GM12878 (cell line): ENCODE measurements at regions of chr11 and their contacts with region 1.

Region 1: DNA sequence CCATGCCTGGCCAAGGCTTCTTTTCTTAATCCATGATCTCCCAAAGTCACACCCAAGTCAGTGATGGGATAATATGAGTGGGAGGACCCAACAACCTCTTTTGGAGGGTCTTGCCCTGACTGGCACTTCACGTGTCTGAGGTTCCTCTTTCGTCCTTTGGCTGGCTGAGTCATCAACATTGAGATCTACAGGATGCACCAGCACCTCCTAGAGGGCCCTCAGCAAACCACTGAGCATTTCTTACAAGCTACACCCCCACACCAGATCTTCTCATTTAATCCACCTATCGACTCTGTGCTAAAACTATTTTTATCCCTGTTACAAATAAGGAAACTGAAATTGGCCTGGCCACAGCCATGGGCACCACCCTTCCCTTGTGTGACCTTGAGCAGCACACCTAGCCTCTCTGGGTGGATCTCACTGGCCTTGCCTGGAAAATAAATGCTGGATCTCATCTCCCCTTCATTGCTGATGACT is 63.4 kb downstream of the FLI1 start:
- DNase-seq: peak; percentile 93
- ATAC-seq: peak; percentile 89
- H3K4me3 ChIP-seq: no peak overlapping the region
- H3K27ac ChIP-seq: peak overlapping the region; percentile 87
- H3K4me1 ChIP-seq: peaks cover 31% of the 10 kb centered on the region
- H3K27me3 ChIP-seq: no peaks in the 10 kb centered on the region
- CTCF ChIP-seq: peak; percentile 81 to 94 (median 92)
- EP300 ChIP-seq: 0 out of 4 replicates have a peak, but pooled peaks of 1 of the 2 experiments have one; percentile 56
- POLR2A ChIP-seq: no peak
- RAD21 ChIP-seq: peak; percentile 90

Region 2: DNA sequence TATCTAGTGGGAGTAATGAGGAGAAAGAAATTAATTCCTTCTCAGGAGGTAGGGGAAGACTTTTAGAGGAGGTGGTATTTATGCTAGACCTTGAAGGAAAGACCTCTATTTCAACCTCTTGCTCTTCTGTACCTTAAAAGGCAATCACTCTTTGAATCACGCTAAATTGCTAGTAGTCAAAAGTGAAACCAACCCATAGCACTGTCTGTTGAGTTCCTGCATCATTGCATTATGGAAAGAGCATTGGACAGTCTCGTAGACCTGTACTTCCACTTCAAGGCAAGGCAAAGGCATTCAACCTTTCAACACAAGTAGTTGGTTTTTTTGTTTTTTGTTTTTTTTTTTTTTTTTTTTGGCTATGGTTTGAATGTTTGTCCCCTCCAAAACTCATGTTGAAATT is 940.3 kb before region 1 on chr11:
- CTCF ChIA-PET with region 1: no interaction called
- POLR2A ChIA-PET with region 1: no interaction called
- RAD21 ChIA-PET with region 1: no interaction called
- SMC1A ChIA-PET with region 1: no interaction called
- in situ Hi-C with region 1: no loop called
- intact Hi-C with region 1: no loop called
- DNase-seq: no peak
- ATAC-seq: no peak
- H3K4me3 ChIP-seq: no peak overlapping the region
- H3K27ac ChIP-seq: no peak overlapping the region
- H3K4me1 ChIP-seq: no peaks in the 10 kb centered on the region
- H3K27me3 ChIP-seq: no peaks in the 10 kb centered on the region
- CTCF ChIP-seq: no peak
- EP300 ChIP-seq: no peak
- POLR2A ChIP-seq: no peak
- RAD21 ChIP-seq: no peak

Region 3: DNA sequence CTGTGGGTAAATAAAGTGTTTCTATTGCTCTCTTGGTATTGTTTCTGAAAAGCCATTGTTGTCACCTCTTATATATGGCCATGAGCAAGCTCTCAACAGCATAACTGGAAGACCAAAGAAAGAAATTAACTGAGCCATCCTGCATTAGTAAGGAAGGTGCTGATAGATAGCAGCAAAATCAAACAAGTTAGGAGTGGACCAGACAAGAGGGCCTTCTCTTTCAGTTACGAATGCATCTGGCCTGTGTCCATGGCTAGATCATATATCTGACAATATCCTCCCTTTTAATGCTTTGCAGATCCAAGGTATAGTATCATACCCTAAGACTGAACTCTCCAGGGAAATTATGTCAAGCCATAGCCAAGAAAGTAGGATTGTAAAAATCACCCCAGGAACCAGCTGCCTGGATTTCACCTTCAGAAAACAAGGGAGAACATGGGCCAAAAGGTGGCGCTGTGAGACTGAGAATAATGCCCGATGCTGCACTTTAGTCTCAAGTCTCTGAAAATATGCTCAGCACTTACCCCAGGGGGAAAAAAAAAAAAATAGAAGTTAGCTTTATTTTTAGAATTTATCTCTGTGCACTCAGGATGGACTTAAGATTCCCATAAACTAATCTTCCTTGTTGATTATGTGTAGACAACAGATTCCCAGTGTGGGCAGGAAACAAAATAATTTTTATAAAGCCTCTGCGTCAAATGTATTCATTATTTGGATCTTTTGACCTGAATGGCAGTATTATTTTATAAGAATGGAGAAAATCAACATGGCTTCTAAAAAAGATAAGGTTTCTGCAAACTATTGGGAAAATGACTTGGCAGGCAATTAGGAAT is 585.0 kb before region 1 on chr11:
- CTCF ChIA-PET with region 1: interaction called, 14 read pairs
- POLR2A ChIA-PET with region 1: no interaction called
- RAD21 ChIA-PET with region 1: interaction called, 22 read pairs
- SMC1A ChIA-PET with region 1: interaction called, 14 read pairs
- in situ Hi-C with region 1: loop called (anchors 5 kb)
- intact Hi-C with region 1: loop called (anchors 1 kb)
- DNase-seq: peak; percentile 38
- ATAC-seq: peak; percentile 93
- H3K4me3 ChIP-seq: no peak overlapping the region
- H3K27ac ChIP-seq: no peak overlapping the region
- H3K4me1 ChIP-seq: no peaks in the 10 kb centered on the region
- H3K27me3 ChIP-seq: no peaks in the 10 kb centered on the region; a peak in 2 of 4 replicates
- CTCF ChIP-seq: peak; percentile 68 to 91 (median 72)
- EP300 ChIP-seq: no peak
- POLR2A ChIP-seq: no peak
- RAD21 ChIP-seq: peak; percentile 97

Region 4: GRCh38 chr11:128552783-128553661 is 204.3 kb before region 1 on chr11:
- CTCF ChIA-PET with region 1: interaction called, 8 read pairs
- POLR2A ChIA-PET with region 1: no interaction called
- RAD21 ChIA-PET with region 1: interaction called, 23 read pairs
- SMC1A ChIA-PET with region 1: interaction called, 14 read pairs
- in situ Hi-C with region 1: no loop called
- intact Hi-C with region 1: loop called (anchors 1 kb)
- DNase-seq: peak; percentile 95
- ATAC-seq: peak; percentile 79
- H3K4me3 ChIP-seq: peak overlapping the region; percentile 69
- H3K27ac ChIP-seq: peak overlapping the region; percentile 100
- H3K4me1 ChIP-seq: peaks cover 50% of the 10 kb centered on the region
- H3K27me3 ChIP-seq: no peaks in the 10 kb centered on the region
- CTCF ChIP-seq: no peak
- EP300 ChIP-seq: peak in 1 of 2 experiments; percentile 35; a peak in 2 of 4 replicates
- POLR2A ChIP-seq: peak; percentile 82
- RAD21 ChIP-seq: 0 out of 2 replicates have a peak, but pooled peaks have one; percentile 2

Region 5: GRCh38 chr11:128624269-128625175 is 132.8 kb before region 1 on chr11:
- CTCF ChIA-PET with region 1: interaction called, 187 read pairs
- POLR2A ChIA-PET with region 1: interaction called, 4 read pairs
- RAD21 ChIA-PET with region 1: interaction called, 103 read pairs
- SMC1A ChIA-PET with region 1: interaction called, 159 read pairs
- in situ Hi-C with region 1: no loop called
- intact Hi-C with region 1: no loop called
- DNase-seq: no peak
- ATAC-seq: peak; percentile 77
- H3K4me3 ChIP-seq: no peak overlapping the region
- H3K27ac ChIP-seq: peak overlapping the region; percentile 86
- H3K4me1 ChIP-seq: peaks cover 66% of the 10 kb centered on the region
- H3K27me3 ChIP-seq: no peaks in the 10 kb centered on the region
- CTCF ChIP-seq: no peak
- EP300 ChIP-seq: peak in 1 of 2 experiments; percentile 21; a peak in 1 of 4 replicates
- POLR2A ChIP-seq: no peak
- RAD21 ChIP-seq: no peak

Region 6: DNA sequence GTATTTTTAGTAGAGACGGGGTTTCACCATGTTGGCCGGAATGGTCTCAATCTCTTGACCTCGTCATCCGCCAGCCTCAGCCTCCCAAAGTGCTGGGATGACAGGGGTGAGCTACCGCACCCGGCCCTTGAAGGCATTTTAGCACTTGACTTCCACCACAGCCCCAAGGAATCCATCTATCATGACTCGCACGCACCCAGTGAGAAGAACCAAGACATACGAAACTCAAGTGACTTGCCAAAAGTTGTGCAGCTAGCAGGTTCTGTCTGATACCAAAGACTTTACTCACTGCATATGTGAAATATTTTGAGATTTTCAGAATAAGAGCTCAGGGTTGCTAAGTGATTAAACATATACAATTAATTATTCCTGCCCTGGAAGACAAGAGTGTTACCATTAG is 42.4 kb before region 1 on chr11:
- CTCF ChIA-PET with region 1: interaction called, 11 read pairs
- POLR2A ChIA-PET with region 1: interaction called, 6 read pairs
- RAD21 ChIA-PET with region 1: interaction called, 13 read pairs
- SMC1A ChIA-PET with region 1: interaction called, 15 read pairs
- in situ Hi-C with region 1: no loop called
- intact Hi-C with region 1: no loop called
- DNase-seq: no peak
- ATAC-seq: no peak
- H3K4me3 ChIP-seq: no peak overlapping the region
- H3K27ac ChIP-seq: no peak overlapping the region
- H3K4me1 ChIP-seq: peaks cover 57% of the 10 kb centered on the region
- H3K27me3 ChIP-seq: no peaks in the 10 kb centered on the region
- CTCF ChIP-seq: no peak
- EP300 ChIP-seq: no peak
- POLR2A ChIP-seq: no peak
- RAD21 ChIP-seq: no peak

Region 7: GRCh38 chr11:128733440-128734102 is 23.7 kb before region 1 on chr11:
- CTCF ChIA-PET with region 1: interaction called, 90 read pairs
- POLR2A ChIA-PET with region 1: interaction called, 9 read pairs
- RAD21 ChIA-PET with region 1: interaction called, 83 read pairs
- SMC1A ChIA-PET with region 1: interaction called, 79 read pairs
- in situ Hi-C with region 1: no loop called
- intact Hi-C with region 1: loop called (anchors 1 kb)
- DNase-seq: no peak
- ATAC-seq: peak; percentile 55
- H3K4me3 ChIP-seq: peak overlapping the region; percentile 24; the same call in 1 of the 2 replicates
- H3K27ac ChIP-seq: peak overlapping the region; percentile 91
- H3K4me1 ChIP-seq: peaks cover 89% of the 10 kb centered on the region
- H3K27me3 ChIP-seq: no peaks in the 10 kb centered on the region
- CTCF ChIP-seq: no peak
- EP300 ChIP-seq: no peak
- POLR2A ChIP-seq: 0 out of 2 replicates have a peak, but pooled peaks have one; percentile 31
- RAD21 ChIP-seq: no peak